ENCODE measurements at regions of chr4 and their contacts with region 1.

Region 1: DNA sequence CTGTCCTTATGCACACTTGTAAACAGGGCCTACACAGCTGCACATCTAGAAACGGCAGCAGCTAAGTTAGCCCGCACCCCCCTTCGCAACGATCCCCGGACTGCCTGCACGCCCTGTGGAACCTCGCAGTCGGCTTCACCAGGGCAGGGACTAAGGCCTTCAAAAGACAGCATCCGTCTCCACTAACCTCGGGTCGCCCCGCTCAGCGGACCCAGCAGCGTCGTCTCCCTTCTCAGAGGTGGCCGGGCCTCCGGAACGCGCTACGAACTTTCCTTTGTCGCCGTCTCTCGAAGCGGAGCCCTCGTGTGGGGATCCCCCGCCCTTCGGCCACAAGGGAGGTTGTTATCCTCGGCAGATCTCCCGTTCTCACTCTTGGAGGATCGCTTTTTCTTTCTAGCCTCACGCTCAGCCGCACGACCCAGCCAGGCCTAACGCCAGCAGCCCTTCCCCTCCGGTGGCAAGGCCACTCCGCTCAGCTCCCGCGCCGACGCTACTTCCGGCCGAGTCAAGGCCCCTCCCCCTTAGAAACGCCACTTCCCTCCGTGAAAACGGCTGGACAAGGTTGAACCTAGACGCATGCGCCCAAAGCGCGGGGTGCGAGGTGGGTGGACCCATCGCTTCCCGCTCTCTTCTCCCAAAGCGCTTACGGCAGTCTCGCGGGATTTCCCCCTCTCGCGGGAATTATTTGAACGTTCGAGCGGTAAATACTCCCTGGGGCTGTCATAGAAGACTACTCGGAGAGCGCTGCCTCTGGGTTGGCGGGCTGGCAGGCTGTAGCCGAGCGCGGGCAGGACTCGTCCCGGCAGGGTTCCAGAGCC is at the starts of genes DCAF16 and NCAPG:
- DNase-seq: peak; percentile 99
- H3K4me3 ChIP-seq: peak within 1 kb of the TSS; percentile 72
- H3K27ac ChIP-seq: peak within 1 kb of the TSS; percentile 94
- H3K4me1 ChIP-seq: peaks cover 24% of the 10 kb centered on the region
- H3K27me3 ChIP-seq: no peaks in the 10 kb centered on the region
- CTCF ChIP-seq: no peak
- total RNA-seq, gene DCAF16: 59.5 and 60.2 TPM in 2 replicates
- total RNA-seq, gene NCAPG: 105 and 122 TPM in 2 replicates

Region 2: GRCh38 chr4:17033768-17034181 is 776.7 kb before region 1 on chr4:
- CTCF ChIA-PET with region 1: no interaction called
- POLR2A ChIA-PET with region 1: no interaction called
- intact Hi-C with region 1: no loop called
- DNase-seq: no peak
- H3K4me3 ChIP-seq: no peak overlapping the region
- H3K27ac ChIP-seq: no peak overlapping the region
- H3K4me1 ChIP-seq: peaks cover 8% of the 10 kb centered on the region
- H3K27me3 ChIP-seq: no peaks in the 10 kb centered on the region
- CTCF ChIP-seq: no peak

Region 3: DNA sequence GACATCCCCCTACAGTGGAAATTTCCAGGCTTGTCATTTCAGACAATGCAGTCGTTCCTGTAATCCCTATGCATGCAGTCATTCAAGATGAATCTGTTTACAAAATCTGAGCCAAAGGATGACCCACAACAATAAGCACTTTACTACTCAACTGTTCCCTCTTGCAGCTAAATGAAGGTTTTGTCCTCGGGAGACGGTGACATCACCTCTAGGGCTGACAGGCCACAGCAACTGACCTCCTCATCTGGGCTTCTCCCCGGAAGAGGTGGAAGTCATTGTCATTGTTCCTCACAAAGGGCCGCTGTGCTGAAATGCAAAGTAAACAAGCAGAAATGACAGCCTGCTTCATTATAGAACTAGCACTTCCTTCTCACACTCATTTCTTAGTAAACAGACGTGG is 266.3 kb before region 1 on chr4:
- CTCF ChIA-PET with region 1: interaction called, 3 read pairs
- POLR2A ChIA-PET with region 1: no interaction called
- intact Hi-C with region 1: loop called (anchors 1 kb)
- DNase-seq: no peak
- H3K4me3 ChIP-seq: no peak overlapping the region
- H3K27ac ChIP-seq: no peak overlapping the region
- H3K4me1 ChIP-seq: no peaks in the 10 kb centered on the region
- H3K27me3 ChIP-seq: no peaks in the 10 kb centered on the region
- CTCF ChIP-seq: no peak

Region 4: GRCh38 chr4:17614416-17615299 is 195.8 kb before region 1 on chr4 and contains the start of gene MED28:
- CTCF ChIA-PET with region 1: no interaction called
- POLR2A ChIA-PET with region 1: no interaction called
- intact Hi-C with region 1: loop called (anchors 10 kb)
- DNase-seq: peak; percentile 97
- H3K4me3 ChIP-seq: peak within 1 kb of the TSS; percentile 77
- H3K27ac ChIP-seq: peak within 1 kb of the TSS; percentile 86
- H3K4me1 ChIP-seq: peaks cover 10% of the 10 kb centered on the region
- H3K27me3 ChIP-seq: no peaks in the 10 kb centered on the region
- CTCF ChIP-seq: no peak
- total RNA-seq, gene MED28: 46.6 and 48.8 TPM in 2 replicates

Region 5: GRCh38 chr4:18021722-18022571 is 211.5 kb after region 1 on chr4 and contains the start of gene LCORL:
- CTCF ChIA-PET with region 1: no interaction called
- POLR2A ChIA-PET with region 1: no interaction called
- intact Hi-C with region 1: loop called (anchors 5 kb)
- DNase-seq: peak; percentile 98
- H3K4me3 ChIP-seq: peak within 1 kb of the TSS; percentile 88
- H3K27ac ChIP-seq: peak within 1 kb of the TSS; percentile 95
- H3K4me1 ChIP-seq: no peaks in the 10 kb centered on the region
- H3K27me3 ChIP-seq: no peaks in the 10 kb centered on the region
- CTCF ChIP-seq: no peak
- total RNA-seq, gene LCORL: 29.7 and 30.4 TPM in 2 replicates

Region 6: DNA sequence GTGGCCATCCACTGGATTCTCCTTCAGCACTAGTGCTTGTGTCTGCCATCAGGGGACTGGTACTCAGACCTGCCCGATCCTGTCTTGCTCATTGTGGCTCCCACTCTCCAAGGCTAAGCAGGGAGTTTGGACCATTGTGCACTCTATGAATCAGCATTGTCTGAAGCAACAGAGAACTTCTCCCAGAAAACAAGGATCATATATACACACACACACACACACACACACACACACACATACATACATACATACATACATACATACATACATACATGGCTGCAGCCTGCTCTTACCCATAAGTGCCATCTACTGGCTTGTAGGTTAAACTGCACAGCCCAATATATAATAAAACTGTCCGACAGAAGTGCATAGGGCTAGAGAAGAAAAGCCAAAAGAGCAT is 556.4 kb after region 1 on chr4:
- CTCF ChIA-PET with region 1: no interaction called
- POLR2A ChIA-PET with region 1: no interaction called
- intact Hi-C with region 1: loop called (anchors 5 kb)
- DNase-seq: peak; percentile 46
- H3K4me3 ChIP-seq: no peak overlapping the region
- H3K27ac ChIP-seq: no peak overlapping the region
- H3K4me1 ChIP-seq: no peaks in the 10 kb centered on the region
- H3K27me3 ChIP-seq: no peaks in the 10 kb centered on the region
- CTCF ChIP-seq: peak; percentile 67

Measured in A673 (cell line).